GM12878 (cell line): ENCODE measurements at regions of chr7 and their contacts with region 1.

Region 1: GRCh38 chr7:158829342-158830210 is at the start of gene ESYT2:
- DNase-seq: peak; percentile 82
- ATAC-seq: peak; percentile 84
- H3K4me3 ChIP-seq: peak within 1 kb of the TSS; percentile 80
- H3K27ac ChIP-seq: peak within 1 kb of the TSS; percentile 85
- H3K4me1 ChIP-seq: peaks cover 8% of the 10 kb centered on the region
- H3K27me3 ChIP-seq: no peaks in the 10 kb centered on the region
- CTCF ChIP-seq: peak in 2 of 3 experiments; percentile 10 to 16; a peak in 1 of 6 replicates
- EP300 ChIP-seq: peak in 1 of 2 experiments; percentile 40; a peak in 1 of 4 replicates
- POLR2A ChIP-seq: peak; percentile 93
- RAD21 ChIP-seq: 0 out of 2 replicates have a peak, but pooled peaks have one; percentile 4
- polyA plus RNA-seq, gene ESYT2: 1.9 to 3.2 TPM

Region 2: GRCh38 chr7:158613481-158613880 is 216.1 kb before region 1 on chr7:
- CTCF ChIA-PET with region 1: interaction called, 3 read pairs
- POLR2A ChIA-PET with region 1: interaction called, 4 read pairs
- RAD21 ChIA-PET with region 1: no interaction called
- SMC1A ChIA-PET with region 1: no interaction called
- in situ Hi-C with region 1: no loop called
- intact Hi-C with region 1: loop called (anchors 5 kb)
- DNase-seq: peak; percentile 79
- ATAC-seq: peak; percentile 93
- H3K4me3 ChIP-seq: no peak overlapping the region; the same call in 1 of the 2 replicates
- H3K27ac ChIP-seq: peak overlapping the region; percentile 57
- H3K4me1 ChIP-seq: peaks cover 15% of the 10 kb centered on the region
- H3K27me3 ChIP-seq: no peaks in the 10 kb centered on the region
- CTCF ChIP-seq: no peak
- EP300 ChIP-seq: no peak
- POLR2A ChIP-seq: no peak
- RAD21 ChIP-seq: no peak

Region 3: GRCh38 chr7:158704704-158705468 is 124.7 kb before region 1 on chr7 and contains the start of gene NCAPG2:
- CTCF ChIA-PET with region 1: no interaction called
- POLR2A ChIA-PET with region 1: interaction called, 3 read pairs
- RAD21 ChIA-PET with region 1: no interaction called
- SMC1A ChIA-PET with region 1: interaction called, 5 read pairs
- in situ Hi-C with region 1: loop called (anchors 5 kb)
- intact Hi-C with region 1: loop called (anchors 2 kb)
- DNase-seq: peak; percentile 88
- ATAC-seq: peak; percentile 98
- H3K4me3 ChIP-seq: peak within 1 kb of the TSS; percentile 97
- H3K27ac ChIP-seq: peak within 1 kb of the TSS; percentile 90
- H3K4me1 ChIP-seq: peaks cover 3% of the 10 kb centered on the region
- H3K27me3 ChIP-seq: no peaks in the 10 kb centered on the region
- CTCF ChIP-seq: peak in 1 of 3 experiments; percentile 18; a peak in 1 of 6 replicates
- EP300 ChIP-seq: no peak
- POLR2A ChIP-seq: peak; percentile 98
- RAD21 ChIP-seq: no peak
- polyA plus RNA-seq, gene NCAPG2: 11.2 to 27.9 TPM

Region 4: GRCh38 chr7:158818325-158819213 is 11.0 kb before region 1 on chr7:
- CTCF ChIA-PET with region 1: interaction called, 12 read pairs
- POLR2A ChIA-PET with region 1: interaction called, 7 read pairs
- RAD21 ChIA-PET with region 1: interaction called, 7 read pairs
- SMC1A ChIA-PET with region 1: interaction called, 6 read pairs
- in situ Hi-C with region 1: no loop called
- intact Hi-C with region 1: no loop called
- DNase-seq: peak; percentile 47
- ATAC-seq: peak; percentile 93
- H3K4me3 ChIP-seq: peak overlapping the region; percentile 47
- H3K27ac ChIP-seq: peak overlapping the region; percentile 82
- H3K4me1 ChIP-seq: peaks cover 8% of the 10 kb centered on the region; the same call in 1 of the 2 replicates
- H3K27me3 ChIP-seq: no peaks in the 10 kb centered on the region
- CTCF ChIP-seq: peak in 1 of 3 experiments; percentile 34; a peak in 1 of 6 replicates
- EP300 ChIP-seq: peak; percentile 74 to 90; a peak in 3 of 4 replicates
- POLR2A ChIP-seq: peak; percentile 76
- RAD21 ChIP-seq: no peak; the same call in 1 of the 2 replicates

Region 5: DNA sequence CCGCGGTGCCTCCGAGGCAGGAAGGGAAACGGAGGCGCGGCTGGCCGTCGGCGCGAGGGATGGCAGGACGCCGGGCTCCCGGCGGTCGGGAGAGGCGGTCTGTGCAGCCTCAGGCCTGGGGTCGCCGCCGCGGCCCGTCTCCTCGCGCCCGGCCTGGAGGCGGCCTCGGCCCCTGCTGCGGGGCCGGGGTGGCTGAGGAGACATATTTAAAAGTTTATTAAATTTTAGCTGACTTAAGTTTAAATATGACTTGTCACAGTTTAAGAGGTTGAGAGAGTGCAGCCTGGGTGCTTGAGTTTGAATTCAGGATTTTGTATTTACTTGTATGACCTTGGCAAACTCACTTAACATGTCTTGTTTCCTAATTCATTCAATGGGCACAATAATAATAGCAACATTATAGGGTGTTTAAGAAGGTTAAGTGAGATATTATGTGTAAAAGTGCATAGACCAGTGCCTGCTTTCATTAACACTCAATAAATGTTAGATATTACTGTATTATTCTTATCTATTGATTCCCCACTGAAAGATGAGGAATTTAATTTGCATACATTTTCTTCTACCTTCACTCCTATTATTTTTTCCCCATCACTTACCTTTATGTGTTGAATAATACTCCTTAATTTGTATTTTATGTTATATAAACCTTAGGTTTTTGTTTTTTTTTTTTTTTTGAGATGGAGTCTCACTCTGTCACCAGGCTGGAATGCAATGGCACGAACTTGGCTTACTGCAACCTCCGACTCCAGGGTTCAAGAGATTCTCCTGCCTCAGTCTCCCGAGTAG is 27.5 kb after region 1 on chr7:
- CTCF ChIA-PET with region 1: interaction called, 4 read pairs
- POLR2A ChIA-PET with region 1: interaction called, 3 read pairs
- RAD21 ChIA-PET with region 1: no interaction called
- SMC1A ChIA-PET with region 1: interaction called, 3 read pairs
- in situ Hi-C with region 1: no loop called
- intact Hi-C with region 1: loop called (anchors 2 kb)
- DNase-seq: no peak
- ATAC-seq: peak; percentile 55; the same call in 2 of the 3 replicates
- H3K4me3 ChIP-seq: peak overlapping the region; percentile 78
- H3K27ac ChIP-seq: peak overlapping the region; percentile 22
- H3K4me1 ChIP-seq: no peaks in the 10 kb centered on the region
- H3K27me3 ChIP-seq: no peaks in the 10 kb centered on the region
- CTCF ChIP-seq: no peak
- EP300 ChIP-seq: no peak
- POLR2A ChIP-seq: no peak
- RAD21 ChIP-seq: no peak

Region 6: DNA sequence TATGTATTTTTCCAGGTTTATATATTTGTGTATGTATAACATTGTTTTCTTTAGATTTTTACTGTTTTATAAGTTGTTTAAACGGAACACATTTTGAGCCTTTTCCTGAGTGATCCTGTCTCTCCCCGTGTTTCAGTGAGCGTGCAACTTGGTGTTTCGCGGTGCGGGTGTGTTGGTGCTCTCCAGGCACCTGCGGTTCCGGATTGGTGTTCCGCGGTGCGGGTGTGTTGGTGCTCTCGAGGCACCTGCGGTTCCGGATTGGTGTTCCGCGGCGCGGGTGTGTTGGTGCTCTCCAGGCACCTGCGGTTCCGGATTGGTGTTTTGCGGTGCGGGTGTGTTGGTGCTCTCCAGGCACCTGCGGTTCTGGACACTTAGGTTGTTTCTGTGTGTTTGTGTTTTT is 47.4 kb after region 1 on chr7:
- CTCF ChIA-PET with region 1: no interaction called
- POLR2A ChIA-PET with region 1: no interaction called
- RAD21 ChIA-PET with region 1: no interaction called
- SMC1A ChIA-PET with region 1: no interaction called
- in situ Hi-C with region 1: no loop called
- intact Hi-C with region 1: no loop called
- DNase-seq: no peak
- ATAC-seq: no peak
- H3K4me3 ChIP-seq: no peak overlapping the region
- H3K27ac ChIP-seq: no peak overlapping the region
- H3K4me1 ChIP-seq: no peaks in the 10 kb centered on the region
- H3K27me3 ChIP-seq: no peaks in the 10 kb centered on the region
- CTCF ChIP-seq: no peak
- EP300 ChIP-seq: no peak
- POLR2A ChIP-seq: no peak
- RAD21 ChIP-seq: no peak